Dorsolateral prefrontal cortex (tissue), 120 donors: ENCODE measurements at regions of chr2 and their contacts with region 1.

Region 1: GRCh38 chr2:151828143-151828889 is at the start of gene ARL5A:
- DNase-seq: peak; percentile 88 to 98 (median 94)
- H3K4me3 ChIP-seq: peak within 1 kb of the TSS; percentile 47 to 98 (median 87)
- H3K27ac ChIP-seq: peak within 1 kb of the TSS; percentile 25 to 95 (median 82)
- H3K27me3 ChIP-seq: no peaks in the 10 kb centered on the region
- CTCF ChIP-seq: peak in 26 of 56 donors; percentile 11 to 57 (median 24)
- total RNA-seq, gene ARL5A: 32.5 to 67.6 (median 45.8) TPM

Region 2: DNA sequence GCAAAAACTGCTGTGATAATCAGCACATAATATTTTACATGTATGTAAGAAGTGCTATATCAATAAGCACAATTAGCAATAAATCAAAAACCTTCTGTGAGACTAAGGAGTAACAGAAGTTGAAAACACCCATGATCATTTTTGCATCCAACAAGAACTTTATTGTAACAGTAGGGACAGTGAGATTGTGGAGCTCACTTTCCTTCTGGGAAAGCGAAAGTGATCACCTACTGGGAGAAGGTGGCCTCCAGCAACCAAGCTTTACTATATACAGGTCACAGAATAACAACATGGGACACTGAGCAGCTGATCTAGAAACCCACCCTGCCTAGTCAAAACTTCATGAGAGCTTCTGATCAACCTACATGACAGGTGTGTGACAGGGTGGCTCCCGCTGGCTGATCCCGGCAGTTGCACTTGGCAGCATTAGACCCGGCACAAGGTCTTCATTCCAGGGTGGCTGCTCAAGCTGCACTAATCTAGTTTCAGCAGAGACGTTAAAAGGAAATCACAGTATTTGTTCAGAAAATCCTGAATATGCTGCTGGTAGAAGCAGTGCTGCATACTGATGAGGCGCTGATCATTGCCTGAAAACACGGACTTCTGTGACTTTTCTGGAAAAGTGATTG is 63.4 kb after region 1 on chr2:
- intact Hi-C with region 1: no loop called
- DNase-seq: peak in 1 of 10 donors; percentile 74
- H3K4me3 ChIP-seq: peak overlapping the region in 49 of 59 donors; percentile 3 to 56 (median 34)
- H3K27ac ChIP-seq: peak overlapping the region in 3 of 59 donors; percentile 10 to 51 (median 15)
- H3K27me3 ChIP-seq: no peaks in the 10 kb centered on the region
- CTCF ChIP-seq: no peak

Region 3: GRCh38 chr2:152005607-152006006 is 177.3 kb after region 1 on chr2:
- intact Hi-C with region 1: loop called (anchors 10 kb)
- DNase-seq: no peak
- H3K4me3 ChIP-seq: no peak overlapping the region
- H3K27ac ChIP-seq: no peak overlapping the region
- H3K27me3 ChIP-seq: no peaks in the 10 kb centered on the region
- CTCF ChIP-seq: no peak